Common myeloid progenitor, CD34-positive (primary cell): ENCODE measurements at regions of chr11 and their contacts with region 1.

Region 1: DNA sequence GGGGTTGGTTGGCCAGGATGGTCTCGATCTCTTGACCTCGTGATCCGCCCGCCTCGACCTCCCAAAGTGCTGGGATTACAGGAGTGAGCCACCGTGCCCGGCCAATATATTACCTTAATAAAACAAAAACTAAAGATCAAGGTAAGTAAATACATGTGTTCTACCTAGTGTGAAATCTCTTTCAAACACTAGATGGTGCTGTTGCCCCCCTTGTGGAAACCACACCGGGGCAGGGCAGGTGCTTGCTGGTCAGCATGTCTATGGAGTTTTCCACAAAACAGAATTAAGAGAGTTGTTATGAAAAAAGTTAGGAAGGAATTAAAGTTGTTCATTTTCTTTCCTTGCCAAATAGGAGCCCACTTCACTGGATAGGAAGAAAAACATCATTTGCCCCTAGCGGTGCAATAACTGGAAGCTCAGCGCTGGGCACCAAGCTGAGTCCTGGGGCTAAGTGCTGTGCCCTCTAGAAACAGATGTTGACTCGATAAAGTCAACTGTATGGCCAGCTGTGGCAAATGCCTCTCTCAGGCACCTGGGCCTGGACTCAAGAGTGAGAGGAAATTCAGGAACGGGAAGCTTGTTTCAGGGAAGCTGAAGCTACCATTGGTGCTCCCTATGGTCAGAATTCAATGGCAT is 6.3 kb upstream of the KCNJ5 start:
- DNase-seq: peak; percentile 74 to 81 (median 74)
- H3K4me3 ChIP-seq: no peak overlapping the region
- H3K27ac ChIP-seq: no peak overlapping the region
- H3K4me1 ChIP-seq: peaks cover 0 to 7% (median 0%) of the 10 kb centered on the region in 4 experiments
- H3K27me3 ChIP-seq: peaks cover 3 to 28% (median 24%) of the 10 kb centered on the region in 5 experiments

Region 2: GRCh38 chr11:128919216-128919615 is 34.4 kb after region 1 on chr11:
- CTCF ChIA-PET with region 1: interaction called, 37 read pairs
- POLR2A ChIA-PET with region 1: no interaction called
- DNase-seq: peak in 2 of 3 donors; percentile 68 to 72
- H3K4me3 ChIP-seq: peak overlapping the region in 1 of 7 experiments; percentile 12
- H3K27ac ChIP-seq: no peak overlapping the region
- H3K4me1 ChIP-seq: peaks cover 0 to 34% (median 20%) of the 10 kb centered on the region in 4 experiments
- H3K27me3 ChIP-seq: peaks cover 0 to 2% (median 0%) of the 10 kb centered on the region in 5 experiments

Region 3: DNA sequence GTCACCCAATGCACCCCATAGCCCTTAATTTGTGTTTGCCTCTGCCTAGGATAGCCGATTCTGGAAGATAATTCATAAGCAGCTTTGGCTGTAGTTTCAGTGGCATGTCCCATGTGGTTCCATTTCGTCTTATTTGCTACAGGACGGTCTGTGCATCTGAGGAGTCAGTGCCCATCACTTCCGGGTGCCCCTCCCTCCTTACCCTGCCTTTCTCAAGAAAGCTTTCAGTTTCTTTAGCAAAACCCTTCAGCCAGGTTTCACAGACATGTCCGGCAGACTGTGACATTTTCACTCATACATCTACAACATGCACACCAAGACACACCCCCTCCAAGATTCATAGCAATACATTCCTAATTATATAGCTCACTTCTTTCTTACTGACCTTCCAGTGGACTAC is 43.6 kb after region 1 on chr11:
- CTCF ChIA-PET with region 1: interaction called, 640 read pairs
- POLR2A ChIA-PET with region 1: no interaction called
- DNase-seq: peak in 2 of 3 donors; percentile 48 to 51
- H3K4me3 ChIP-seq: peak overlapping the region in 1 of 7 experiments; percentile 11
- H3K27ac ChIP-seq: no peak overlapping the region
- H3K4me1 ChIP-seq: peaks cover 0 to 6% (median 0%) of the 10 kb centered on the region in 4 experiments
- H3K27me3 ChIP-seq: peaks cover 0 to 9% (median 0%) of the 10 kb centered on the region in 5 experiments